IMR-90 (cell line): ENCODE measurements at regions of chr12 and their contacts with region 1.

Region 1: DNA sequence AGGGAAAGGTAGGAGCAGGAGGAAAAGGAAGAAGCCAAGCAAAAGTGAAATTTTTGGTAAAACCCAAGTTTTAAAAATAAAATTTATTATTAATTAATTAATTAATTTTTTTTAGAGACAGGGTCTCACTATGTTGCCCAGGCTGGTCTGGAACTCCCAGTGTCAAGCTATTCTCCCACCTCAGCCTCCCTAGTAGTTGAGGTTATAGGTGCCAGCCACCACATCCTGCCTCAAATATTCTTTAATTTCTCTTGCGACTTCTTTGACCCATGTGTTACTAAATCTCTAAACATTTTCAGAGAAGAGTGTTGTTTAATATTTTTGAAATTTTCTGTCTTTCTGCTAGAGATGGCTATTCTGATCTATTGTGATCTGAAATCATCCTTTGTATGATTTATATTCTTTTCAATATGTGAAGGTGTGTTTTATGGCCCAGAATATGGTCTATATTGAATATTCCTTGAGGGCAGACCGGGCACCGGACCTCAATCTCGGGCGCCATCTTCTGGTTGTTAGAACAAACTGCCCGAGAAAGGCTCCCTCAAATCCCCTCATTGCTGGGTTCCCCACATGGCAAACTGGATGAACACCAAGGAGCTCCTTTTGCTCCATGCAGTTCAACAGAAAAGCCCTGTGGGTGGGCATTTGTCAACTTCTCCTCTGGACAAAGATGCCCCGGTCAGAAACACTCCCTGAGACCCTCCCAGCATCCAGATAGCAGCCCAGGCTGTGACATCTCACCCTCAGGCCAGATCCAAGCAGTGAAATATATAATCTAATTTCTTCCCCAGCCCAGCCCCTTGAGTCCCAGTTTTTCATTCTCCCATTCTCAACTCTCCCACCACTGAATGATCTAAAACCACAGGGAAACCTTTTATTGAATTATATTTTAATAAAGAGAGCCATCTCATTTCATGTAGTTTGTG is 110.5 kb downstream of the ASCL4 start:
- DNase-seq: peak; percentile 49
- ATAC-seq: peak; percentile 93
- H3K4me3 ChIP-seq: no peak overlapping the region
- H3K27ac ChIP-seq: no peak overlapping the region
- H3K4me1 ChIP-seq: no peaks in the 10 kb centered on the region
- H3K27me3 ChIP-seq: no peaks in the 10 kb centered on the region
- CTCF ChIP-seq: peak; percentile 84
- POLR2A ChIP-seq: 0 out of 2 replicates have a peak, but pooled peaks have one; percentile 30
- RAD21 ChIP-seq: peak; percentile 81

Region 2: DNA sequence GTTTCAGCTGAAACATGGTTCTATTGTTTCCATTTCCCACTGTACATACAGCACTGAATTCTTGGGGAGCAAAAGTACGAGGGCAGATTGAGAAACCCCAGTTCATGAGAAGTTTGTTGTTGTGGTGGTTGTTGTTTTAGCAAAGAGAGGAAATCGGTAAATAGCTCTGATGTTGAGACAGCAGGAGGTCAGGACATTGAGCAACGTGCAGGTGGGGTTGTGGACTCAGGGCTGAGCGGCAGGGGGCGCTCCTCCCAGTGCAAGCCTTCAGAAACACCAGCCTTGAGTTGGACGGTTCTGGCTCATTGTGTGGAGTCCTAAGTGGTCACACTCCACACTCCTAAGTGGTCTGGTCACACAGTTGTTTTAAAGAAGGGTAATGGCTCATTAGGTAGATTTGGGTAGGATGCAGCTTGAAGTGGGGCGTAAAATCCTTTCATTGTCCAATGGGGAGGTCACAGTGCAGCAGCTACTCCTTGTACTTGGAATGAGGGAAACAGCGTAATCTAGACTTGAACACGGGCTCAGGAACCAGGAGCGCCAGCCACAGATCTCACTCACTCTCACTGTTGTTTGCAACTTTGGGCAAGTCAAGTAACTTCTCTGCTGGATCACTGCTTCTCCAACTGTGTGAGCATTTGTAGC is 213.9 kb before region 1 on chr12:
- CTCF ChIA-PET with region 1: interaction called, 7 read pairs
- POLR2A ChIA-PET with region 1: no interaction called
- dilution Hi-C with region 1: no loop called
- in situ Hi-C with region 1: loop called (anchors 5 kb)
- intact Hi-C with region 1: loop called (anchors 1 kb)
- DNase-seq: peak; percentile 7
- ATAC-seq: no peak
- H3K4me3 ChIP-seq: no peak overlapping the region
- H3K27ac ChIP-seq: no peak overlapping the region
- H3K4me1 ChIP-seq: no peaks in the 10 kb centered on the region
- H3K27me3 ChIP-seq: peaks cover 37% of the 10 kb centered on the region
- CTCF ChIP-seq: peak; percentile 44
- POLR2A ChIP-seq: no peak
- RAD21 ChIP-seq: no peak

Region 3: DNA sequence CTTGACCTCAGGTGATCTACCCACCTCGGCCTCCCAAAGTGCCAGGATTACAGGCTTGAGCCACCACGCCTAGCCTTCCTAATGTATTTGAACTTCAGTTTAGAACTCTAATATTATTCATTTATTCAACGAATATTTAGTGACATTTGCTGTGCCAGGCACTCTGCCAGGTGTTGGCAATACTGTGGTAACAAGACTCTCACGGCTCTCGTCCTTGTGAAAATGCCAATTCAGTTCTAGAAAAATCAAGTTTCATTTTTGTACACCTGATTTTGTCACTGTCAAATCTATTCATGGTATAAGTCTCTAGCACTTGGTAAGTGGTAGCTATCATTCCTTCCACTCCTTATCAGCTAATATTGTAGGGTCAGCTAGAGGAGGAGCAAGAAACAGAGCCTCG is 205.7 kb before region 1 on chr12:
- CTCF ChIA-PET with region 1: interaction called, 7 read pairs
- POLR2A ChIA-PET with region 1: no interaction called
- dilution Hi-C with region 1: no loop called
- in situ Hi-C with region 1: loop called (anchors 5 kb)
- intact Hi-C with region 1: loop called (anchors 1 kb)
- DNase-seq: no peak
- ATAC-seq: no peak
- H3K4me3 ChIP-seq: no peak overlapping the region
- H3K27ac ChIP-seq: no peak overlapping the region
- H3K4me1 ChIP-seq: no peaks in the 10 kb centered on the region
- H3K27me3 ChIP-seq: peaks cover 30% of the 10 kb centered on the region
- CTCF ChIP-seq: no peak
- POLR2A ChIP-seq: no peak
- RAD21 ChIP-seq: no peak

Region 4: GRCh38 chr12:107760809-107761501 is 124.1 kb before region 1 on chr12 and contains the start of gene PRDM4:
- CTCF ChIA-PET with region 1: no interaction called
- POLR2A ChIA-PET with region 1: no interaction called
- dilution Hi-C with region 1: no loop called
- in situ Hi-C with region 1: no loop called
- intact Hi-C with region 1: loop called (anchors 1 kb)
- DNase-seq: peak; percentile 93
- ATAC-seq: peak; percentile 97
- H3K4me3 ChIP-seq: peak within 1 kb of the TSS; percentile 89
- H3K27ac ChIP-seq: peak within 1 kb of the TSS; percentile 66
- H3K4me1 ChIP-seq: peaks cover 3% of the 10 kb centered on the region
- H3K27me3 ChIP-seq: peaks cover 2% of the 10 kb centered on the region; the same call in 1 of the 2 replicates
- CTCF ChIP-seq: peak; percentile 59
- POLR2A ChIP-seq: peak; percentile 96
- RAD21 ChIP-seq: peak; percentile 57
- total RNA-seq, gene PRDM4: 26.1 and 26.7 TPM in 2 replicates